Caco-2 (cell line): ENCODE measurements at regions of chr5 and their contacts with region 1.

Region 1: GRCh38 chr5:10283927-10284635 is 23.6 kb downstream of the CMBL start:
- DNase-seq: peak; percentile 75 to 82
- H3K4me3 ChIP-seq: no peak overlapping the region
- H3K4me3 Mint-ChIP-seq: no peak overlapping the region
- H3K27ac Mint-ChIP-seq: no peak overlapping the region
- H3K4me1 ChIP-seq: no peaks in the 10 kb centered on the region
- H3K4me1 Mint-ChIP-seq: no peaks in the 10 kb centered on the region
- H3K27me3 ChIP-seq: no peaks in the 10 kb centered on the region
- H3K27me3 Mint-ChIP-seq: no peaks in the 10 kb centered on the region
- CTCF ChIP-seq: peak; percentile 79 to 81

Region 2: GRCh38 chr5:10364186-10364683 is 80.2 kb after region 1 on chr5:
- CTCF ChIA-PET with region 1: interaction called, 16 read pairs
- POLR2A ChIA-PET with region 1: interaction called, 4 read pairs
- intact Hi-C with region 1: loop called (anchors 1 kb)
- DNase-seq: peak in 1 of 2 experiments; percentile 26
- H3K4me3 ChIP-seq: no peak overlapping the region
- H3K4me3 Mint-ChIP-seq: no peak overlapping the region
- H3K27ac Mint-ChIP-seq: no peak overlapping the region
- H3K4me1 ChIP-seq: no peaks in the 10 kb centered on the region
- H3K4me1 Mint-ChIP-seq: peaks cover 8% of the 10 kb centered on the region
- H3K27me3 ChIP-seq: no peaks in the 10 kb centered on the region
- H3K27me3 Mint-ChIP-seq: no peaks in the 10 kb centered on the region
- CTCF ChIP-seq: peak; percentile 21 to 34

Region 3: GRCh38 chr5:10424124-10424731 is 140.1 kb after region 1 on chr5:
- CTCF ChIA-PET with region 1: no interaction called
- POLR2A ChIA-PET with region 1: no interaction called
- intact Hi-C with region 1: loop called (anchors 1 kb)
- DNase-seq: peak in 1 of 2 experiments; percentile 25
- H3K4me3 ChIP-seq: no peak overlapping the region
- H3K4me3 Mint-ChIP-seq: no peak overlapping the region
- H3K27ac Mint-ChIP-seq: no peak overlapping the region
- H3K4me1 ChIP-seq: no peaks in the 10 kb centered on the region
- H3K4me1 Mint-ChIP-seq: no peaks in the 10 kb centered on the region
- H3K27me3 ChIP-seq: no peaks in the 10 kb centered on the region
- H3K27me3 Mint-ChIP-seq: no peaks in the 10 kb centered on the region
- CTCF ChIP-seq: peak; percentile 43 to 54